ENCODE measurements at regions of chr5 and their contacts with region 1.

Region 1: DNA sequence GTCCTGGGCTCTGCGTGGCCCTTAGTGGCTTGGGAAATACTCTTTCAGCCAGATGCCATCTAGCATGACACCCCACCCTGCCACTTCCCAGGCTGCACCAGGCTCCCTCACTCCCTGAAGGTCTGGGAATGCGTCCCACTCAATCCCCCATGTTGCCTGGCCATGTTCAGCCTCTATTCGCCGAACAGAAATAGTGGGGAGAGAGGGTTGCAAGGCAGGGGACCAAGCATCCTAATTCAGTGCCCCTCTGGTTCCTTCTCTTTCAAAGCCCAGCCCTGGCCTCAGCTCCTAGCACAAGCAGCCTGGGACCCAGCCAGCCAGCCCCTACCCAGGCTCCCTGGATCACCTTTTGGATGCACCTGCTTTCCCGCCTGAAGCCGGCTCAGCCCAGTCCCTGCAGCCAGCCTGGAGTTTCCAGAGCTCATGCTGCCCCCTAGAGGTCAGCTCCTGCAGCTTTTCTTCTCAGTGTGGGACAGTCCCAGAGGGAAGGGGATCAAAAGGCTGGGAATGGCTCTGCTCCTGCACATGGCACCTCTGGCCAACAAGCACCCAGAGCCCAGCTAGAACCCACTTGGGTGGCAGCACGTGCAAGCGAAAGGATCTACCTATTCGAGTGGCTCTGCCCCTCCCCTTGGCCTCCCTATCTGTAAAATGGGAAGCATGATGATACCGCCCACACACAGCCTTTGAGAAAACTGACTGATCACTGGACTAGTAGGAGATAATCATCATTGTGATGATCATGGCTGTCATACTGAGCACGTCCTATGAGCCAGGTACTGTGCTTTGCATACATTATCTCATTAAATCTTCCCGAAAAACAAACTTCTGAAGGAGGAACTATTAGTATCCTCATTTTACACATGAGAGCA is 48.7 kb upstream of the C5orf58 start:
- DNase-seq: peak; percentile 52
- CTCF ChIP-seq: peak; percentile 90

Region 2: DNA sequence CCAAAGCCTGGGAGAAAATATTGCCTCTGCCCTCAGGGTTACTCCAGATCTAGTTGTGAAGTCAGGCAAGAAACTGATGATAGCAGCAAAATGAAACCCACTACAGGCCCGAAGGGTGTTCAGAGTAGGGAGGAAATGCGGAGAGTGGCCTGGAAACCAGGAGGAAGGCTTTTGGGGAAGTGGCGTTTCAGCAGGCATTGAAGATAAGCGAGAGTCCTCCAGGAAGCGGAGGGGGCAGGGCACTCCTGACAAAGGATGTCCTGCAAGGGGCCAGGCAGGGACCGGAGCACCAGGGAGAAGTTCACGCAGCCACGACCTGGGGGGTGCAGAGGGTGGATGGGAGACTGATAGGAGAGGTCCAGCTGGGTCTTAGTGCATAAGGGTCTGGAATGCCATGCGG is 86.1 kb before region 1 on chr5:
- in situ Hi-C with region 1: loop called (anchors 10 kb)
- DNase-seq: no peak
- CTCF ChIP-seq: no peak

Measured in GM13977 (cell line).